Activated CD8-positive, alpha-beta T cell treated with anti-CD3 and anti-CD28 coated beads for 36 hours (primary cell): ENCODE measurements at regions of chr14 and their contacts with region 1.

Region 1: GRCh38 chr14:24013654-24014514 is 25.2 kb downstream of the DHRS4L2 start:
- DNase-seq: peak; percentile 63
- ATAC-seq: peak; percentile 99
- H3K4me3 Mint-ChIP-seq: no peak overlapping the region
- H3K27ac Mint-ChIP-seq: no peak overlapping the region
- H3K4me1 Mint-ChIP-seq: peaks cover 22% of the 10 kb centered on the region
- H3K27me3 Mint-ChIP-seq: no peaks in the 10 kb centered on the region
- CTCF ChIP-seq: peak; percentile 84

Region 2: DNA sequence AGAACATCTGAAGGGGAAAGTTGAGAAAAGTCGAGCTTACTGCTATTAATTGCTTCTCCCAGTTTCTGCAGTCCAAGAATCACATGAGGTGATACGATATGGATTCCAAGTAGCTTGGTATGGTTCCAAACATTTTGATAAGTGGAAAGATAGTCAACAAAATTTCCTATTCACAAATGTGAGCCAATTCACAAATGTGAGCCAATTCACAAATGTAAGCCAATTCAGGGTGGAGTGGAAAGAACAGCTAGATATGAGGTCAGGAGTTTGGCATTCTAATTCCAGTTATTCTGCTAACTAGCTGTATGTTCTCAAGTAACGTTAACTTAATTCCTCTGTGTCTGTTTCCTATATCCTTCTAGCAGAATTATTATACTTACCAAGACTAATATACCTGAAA is 97.9 kb before region 1 on chr14:
- CTCF ChIA-PET with region 1: no interaction called
- POLR2A ChIA-PET with region 1: no interaction called
- intact Hi-C with region 1: no loop called
- DNase-seq: no peak
- ATAC-seq: no peak
- H3K4me3 Mint-ChIP-seq: no peak overlapping the region
- H3K27ac Mint-ChIP-seq: no peak overlapping the region
- H3K4me1 Mint-ChIP-seq: no peaks in the 10 kb centered on the region
- H3K27me3 Mint-ChIP-seq: peaks cover 3% of the 10 kb centered on the region
- CTCF ChIP-seq: no peak

Region 3: GRCh38 chr14:24036169-24036962 is 22.5 kb after region 1 on chr14:
- CTCF ChIA-PET with region 1: interaction called, 4 read pairs
- POLR2A ChIA-PET with region 1: no interaction called
- intact Hi-C with region 1: loop called (anchors 2 kb)
- DNase-seq: peak; percentile 75
- ATAC-seq: peak; percentile 84
- H3K4me3 Mint-ChIP-seq: peak overlapping the region; percentile 82
- H3K27ac Mint-ChIP-seq: peak overlapping the region; percentile 75
- H3K4me1 Mint-ChIP-seq: peaks cover 9% of the 10 kb centered on the region
- H3K27me3 Mint-ChIP-seq: no peaks in the 10 kb centered on the region
- CTCF ChIP-seq: peak; percentile 73